ENCODE measurements at regions of chr4 and their contacts with region 1.

Region 1: GRCh38 chr4:48578132-48578968 is 88.3 kb downstream of the ZAR1 start:
- DNase-seq: peak; percentile 59
- H3K4me3 Mint-ChIP-seq: no peak overlapping the region
- H3K27ac Mint-ChIP-seq: no peak overlapping the region
- H3K4me1 Mint-ChIP-seq: no peaks in the 10 kb centered on the region
- H3K27me3 Mint-ChIP-seq: no peaks in the 10 kb centered on the region

Region 2: GRCh38 chr4:48509543-48509942 is 68.8 kb before region 1 on chr4:
- CTCF ChIA-PET with region 1: no interaction called
- DNase-seq: no peak
- H3K4me3 Mint-ChIP-seq: no peak overlapping the region
- H3K27ac Mint-ChIP-seq: no peak overlapping the region
- H3K4me1 Mint-ChIP-seq: no peaks in the 10 kb centered on the region
- H3K27me3 Mint-ChIP-seq: no peaks in the 10 kb centered on the region

Region 3: GRCh38 chr4:48681856-48682255 is 103.5 kb after region 1 on chr4:
- CTCF ChIA-PET with region 1: interaction called, 12 read pairs
- DNase-seq: no peak
- H3K4me3 Mint-ChIP-seq: no peak overlapping the region
- H3K27ac Mint-ChIP-seq: no peak overlapping the region
- H3K4me1 Mint-ChIP-seq: peaks cover 27% of the 10 kb centered on the region
- H3K27me3 Mint-ChIP-seq: no peaks in the 10 kb centered on the region

Region 4: GRCh38 chr4:48963042-48963679 is 384.8 kb after region 1 on chr4:
- CTCF ChIA-PET with region 1: interaction called, 17 read pairs
- DNase-seq: peak; percentile 84
- H3K4me3 Mint-ChIP-seq: no peak overlapping the region
- H3K27ac Mint-ChIP-seq: no peak overlapping the region
- H3K4me1 Mint-ChIP-seq: no peaks in the 10 kb centered on the region
- H3K27me3 Mint-ChIP-seq: peaks cover 3% of the 10 kb centered on the region

Measured in activated naive CD4-positive, alpha-beta T cell treated with anti-CD3 and anti-CD28 coated beads, Interleukin-2, amount 10 ng/mL, durations not matched to agents 7 days and 5 days (primary cell).